ENCODE measurements at regions of chr20 and their contacts with region 1.

Region 1: DNA sequence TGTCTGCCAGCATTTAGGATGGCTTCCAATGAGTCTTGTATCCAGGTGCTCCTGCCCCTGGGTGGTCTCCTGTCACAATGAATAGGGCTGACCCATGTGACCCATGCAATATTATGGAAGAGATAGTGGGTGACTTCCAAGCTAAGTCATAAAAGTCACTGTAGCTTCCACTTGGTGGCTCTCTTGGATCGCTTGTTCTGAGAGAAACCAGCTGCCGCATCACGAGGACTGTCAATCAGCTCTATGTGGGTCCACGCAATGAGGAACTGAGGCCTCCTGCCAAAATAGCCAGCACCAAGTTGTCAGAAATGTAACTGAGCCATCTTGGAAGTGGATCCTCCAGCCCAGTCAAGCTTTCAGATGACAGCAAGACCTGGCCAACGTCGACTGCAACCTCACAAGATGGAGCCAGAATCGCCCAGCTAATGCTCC is 14.9 kb upstream of the MATN4 start:
- DNase-seq: no peak
- ATAC-seq: no peak
- H3K4me3 Mint-ChIP-seq: no peak overlapping the region
- H3K27ac Mint-ChIP-seq: no peak overlapping the region
- H3K4me1 Mint-ChIP-seq: peaks cover 40% of the 10 kb centered on the region
- H3K27me3 Mint-ChIP-seq: no peaks in the 10 kb centered on the region

Region 2: GRCh38 chr20:45300961-45301360 is 22.0 kb before region 1 on chr20:
- CTCF ChIA-PET with region 1: interaction called, 17 read pairs
- POLR2A ChIA-PET with region 1: interaction called, 3 read pairs
- DNase-seq: peak; percentile 59
- ATAC-seq: peak; percentile 91
- H3K4me3 Mint-ChIP-seq: no peak overlapping the region
- H3K27ac Mint-ChIP-seq: no peak overlapping the region
- H3K4me1 Mint-ChIP-seq: peaks cover 18% of the 10 kb centered on the region
- H3K27me3 Mint-ChIP-seq: peaks cover 17% of the 10 kb centered on the region

Region 3: GRCh38 chr20:45347936-45348778 is 25.2 kb after region 1 on chr20 and contains the start of gene SDC4:
- CTCF ChIA-PET with region 1: interaction called, 21 read pairs
- POLR2A ChIA-PET with region 1: interaction called, 5 read pairs
- DNase-seq: peak; percentile 55
- ATAC-seq: peak; percentile 89
- H3K4me3 Mint-ChIP-seq: peak within 1 kb of the TSS; percentile 78
- H3K27ac Mint-ChIP-seq: peak within 1 kb of the TSS; percentile 63
- H3K4me1 Mint-ChIP-seq: peaks cover 37% of the 10 kb centered on the region
- H3K27me3 Mint-ChIP-seq: peaks cover 2% of the 10 kb centered on the region
- total RNA-seq, gene SDC4: 6.6 to 6.7 TPM

Region 4: DNA sequence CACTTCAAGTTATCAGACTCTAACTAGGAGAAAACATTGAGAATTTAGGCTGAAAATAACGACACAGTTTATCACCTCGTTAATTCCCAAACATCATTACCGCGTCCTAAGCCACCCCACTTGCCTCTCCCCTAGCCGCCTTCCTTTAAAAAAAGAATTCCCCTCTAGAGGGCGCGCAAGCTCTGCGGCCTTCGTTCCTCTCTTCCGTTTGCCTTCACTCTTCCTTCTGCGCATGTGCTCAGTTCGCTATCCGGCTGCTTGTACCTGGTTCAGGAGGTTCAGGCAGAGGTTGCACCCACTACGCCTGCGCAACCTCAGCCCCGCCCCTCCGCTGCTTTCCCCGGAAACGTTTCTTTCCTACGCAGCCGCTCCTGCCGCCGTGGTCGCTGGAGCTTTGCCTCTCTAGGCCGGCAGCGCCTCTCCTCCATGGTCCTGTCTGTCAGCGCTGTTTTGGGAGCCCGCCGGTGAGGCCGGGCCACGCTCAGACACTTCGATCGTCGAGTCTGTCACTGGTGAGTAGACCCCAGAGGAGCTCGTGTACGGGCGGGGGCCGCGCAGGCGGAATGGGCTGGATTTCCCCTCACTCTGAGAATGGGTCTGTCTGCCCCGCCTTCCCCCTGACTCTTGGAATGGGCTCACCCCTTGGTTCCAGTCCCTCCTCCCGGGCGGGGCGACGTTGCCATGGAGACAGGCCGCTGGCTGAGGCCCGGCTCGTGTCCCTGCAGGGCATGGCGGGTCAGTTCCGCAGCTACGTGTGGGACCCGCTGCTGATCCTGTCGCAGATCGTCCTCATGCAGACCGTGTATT is 40.0 kb after region 1 on chr20 and contains the start of gene SYS1:
- CTCF ChIA-PET with region 1: interaction called, 65 read pairs
- POLR2A ChIA-PET with region 1: interaction called, 15 read pairs
- DNase-seq: peak; percentile 99
- ATAC-seq: peak; percentile 91
- H3K4me3 Mint-ChIP-seq: peak within 1 kb of the TSS; percentile 97
- H3K27ac Mint-ChIP-seq: peak within 1 kb of the TSS; percentile 93
- H3K4me1 Mint-ChIP-seq: peaks cover 61% of the 10 kb centered on the region
- H3K27me3 Mint-ChIP-seq: no peaks in the 10 kb centered on the region
- total RNA-seq, gene SYS1: 28.0 to 30.8 TPM

Region 5: DNA sequence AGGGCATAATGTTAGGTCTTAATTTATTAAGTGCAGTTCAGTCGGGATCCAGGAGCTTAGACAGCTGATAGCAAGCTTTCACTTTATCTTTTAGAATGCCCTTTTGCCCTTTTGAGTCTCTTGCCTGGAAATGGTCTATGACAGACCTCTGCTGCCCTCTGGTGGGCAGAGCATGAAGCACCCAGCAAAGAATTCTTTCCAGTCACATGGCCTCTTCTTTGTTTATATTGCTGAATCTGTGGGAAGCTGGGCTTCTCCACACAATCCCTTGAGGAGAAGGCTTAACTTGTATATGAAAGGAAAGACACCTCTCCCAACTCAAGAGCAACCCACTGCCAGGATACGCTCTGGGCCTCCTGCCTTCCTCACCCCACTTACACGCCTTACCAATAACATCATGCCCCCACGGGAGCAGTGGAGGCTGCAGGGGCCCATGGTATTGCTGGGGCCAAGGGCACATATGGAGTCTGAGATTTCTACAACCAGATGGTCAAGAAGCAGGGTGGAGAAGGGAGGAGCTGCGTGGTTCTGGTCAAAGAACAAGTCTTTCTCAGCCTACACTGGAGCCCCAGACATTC is 448.3 kb after region 1 on chr20:
- CTCF ChIA-PET with region 1: interaction called, 23 read pairs
- POLR2A ChIA-PET with region 1: no interaction called
- DNase-seq: peak; percentile 85
- ATAC-seq: peak; percentile 78
- H3K4me3 Mint-ChIP-seq: no peak overlapping the region
- H3K27ac Mint-ChIP-seq: no peak overlapping the region
- H3K4me1 Mint-ChIP-seq: peaks cover 5% of the 10 kb centered on the region
- H3K27me3 Mint-ChIP-seq: peaks cover 11% of the 10 kb centered on the region

Measured in activated CD8-positive, alpha-beta T cell treated with anti-CD3 and anti-CD28 coated beads, Interleukin-2, amount 10 ng/mL, durations not matched to agents 7 days and 5 days (primary cell).